Common myeloid progenitor, CD34-positive (primary cell): ENCODE measurements at regions of chr2 and their contacts with region 1.

Region 1: GRCh38 chr2:54558188-54559005 is 102.3 kb downstream of the SPTBN1 start:
- DNase-seq: peak; percentile 81 to 95 (median 92)
- H3K4me3 ChIP-seq: peak overlapping the region; percentile 80 to 100 (median 95)
- H3K27ac ChIP-seq: peak overlapping the region; percentile 81 to 93
- H3K4me1 ChIP-seq: peaks cover 24 to 50% (median 35%) of the 10 kb centered on the region in 4 experiments
- H3K27me3 ChIP-seq: no peaks in the 10 kb centered on the region

Region 2: DNA sequence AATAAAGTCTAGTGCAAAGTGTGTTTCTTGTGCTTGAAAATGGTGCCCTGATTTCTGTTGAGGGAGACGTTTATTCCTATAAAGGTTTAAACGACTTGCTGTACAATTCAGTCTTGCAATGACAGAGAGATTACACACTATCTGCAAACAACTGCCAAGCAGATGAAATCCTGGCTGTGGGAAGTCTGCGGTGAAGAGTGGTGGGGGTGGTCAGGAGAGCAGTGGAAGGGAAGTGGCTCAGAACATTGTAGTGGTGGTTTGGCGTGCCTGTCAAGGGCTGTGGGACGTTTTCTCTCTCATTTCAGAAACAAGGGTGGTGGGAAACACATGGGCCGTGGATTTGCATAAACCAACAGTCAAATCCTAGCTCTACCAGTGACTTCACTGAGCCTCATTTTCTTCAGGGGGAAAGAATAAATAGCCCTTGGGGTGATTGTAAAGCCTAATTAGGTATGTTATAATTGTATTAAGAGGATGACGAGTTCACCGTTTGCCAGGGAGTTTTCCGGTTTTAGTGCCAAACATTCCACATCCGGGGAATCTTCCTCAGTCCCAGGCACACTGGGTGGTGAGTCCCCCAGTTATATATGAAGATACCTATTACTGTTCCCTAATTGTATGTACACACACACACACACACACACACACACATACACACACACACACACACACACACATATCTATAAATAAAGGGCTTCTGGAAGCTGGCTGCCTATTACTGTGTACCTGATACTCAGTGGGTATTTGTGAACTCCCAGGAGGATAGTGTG is 12.7 kb after region 1 on chr2:
- CTCF ChIA-PET with region 1: interaction called, 26 read pairs
- POLR2A ChIA-PET with region 1: interaction called, 18 read pairs
- DNase-seq: peak; percentile 87 to 98 (median 97)
- H3K4me3 ChIP-seq: peak overlapping the region in 5 of 7 experiments; percentile 20 to 62 (median 38)
- H3K27ac ChIP-seq: peak overlapping the region; percentile 26 to 72
- H3K4me1 ChIP-seq: peaks cover 52 to 87% (median 74%) of the 10 kb centered on the region in 4 experiments
- H3K27me3 ChIP-seq: no peaks in the 10 kb centered on the region

Region 3: DNA sequence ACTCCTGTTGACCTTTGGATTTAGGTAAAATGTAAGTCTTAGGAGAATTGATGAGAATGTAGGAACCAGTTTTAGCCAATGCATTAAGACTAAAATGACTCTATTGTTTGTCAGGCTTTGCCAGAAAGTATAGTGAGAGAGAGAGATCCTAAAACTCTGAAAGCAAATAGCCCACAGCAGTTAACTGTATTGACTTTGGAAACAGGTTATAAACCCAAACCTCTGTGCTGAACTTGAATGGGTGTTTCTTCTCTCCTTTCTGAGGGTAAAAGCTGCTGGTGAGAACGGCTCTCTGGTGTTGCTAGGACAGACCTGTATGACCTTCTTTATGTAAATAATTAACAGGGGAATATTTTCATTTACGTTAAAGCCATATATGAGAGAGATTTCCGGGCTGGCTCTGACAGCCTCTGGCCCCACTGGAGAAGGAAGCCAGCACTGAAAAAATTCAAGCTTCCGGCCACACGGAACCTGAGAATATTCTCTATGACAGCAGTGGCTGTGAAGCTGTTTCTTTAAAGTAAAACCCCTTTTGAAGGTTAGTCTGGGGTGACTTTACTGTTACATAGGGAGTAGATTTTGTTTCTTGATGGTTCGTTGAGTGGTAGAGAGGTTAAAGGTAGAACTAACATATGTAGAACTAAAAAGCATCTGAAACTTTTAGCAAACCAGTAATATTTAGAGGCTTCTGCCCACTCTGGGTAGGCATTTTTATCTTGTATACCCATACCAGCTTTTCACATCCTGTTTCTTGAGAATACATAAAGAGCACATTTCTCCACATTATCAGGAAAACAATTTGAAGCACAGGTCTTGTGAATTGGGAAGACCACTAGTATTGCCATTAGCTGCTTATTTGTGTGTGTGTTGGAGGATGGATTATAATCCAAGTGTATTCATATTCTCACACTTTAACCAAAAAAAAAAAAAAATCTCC is 21.6 kb after region 1 on chr2:
- CTCF ChIA-PET with region 1: interaction called, 14 read pairs
- POLR2A ChIA-PET with region 1: interaction called, 3 read pairs
- DNase-seq: peak in 2 of 3 donors; percentile 72 to 75
- H3K4me3 ChIP-seq: peak overlapping the region in 6 of 7 experiments; percentile 2 to 62 (median 41)
- H3K27ac ChIP-seq: peak overlapping the region; percentile 67 to 80
- H3K4me1 ChIP-seq: peaks cover 53 to 96% (median 91%) of the 10 kb centered on the region in 4 experiments
- H3K27me3 ChIP-seq: no peaks in the 10 kb centered on the region

Region 4: DNA sequence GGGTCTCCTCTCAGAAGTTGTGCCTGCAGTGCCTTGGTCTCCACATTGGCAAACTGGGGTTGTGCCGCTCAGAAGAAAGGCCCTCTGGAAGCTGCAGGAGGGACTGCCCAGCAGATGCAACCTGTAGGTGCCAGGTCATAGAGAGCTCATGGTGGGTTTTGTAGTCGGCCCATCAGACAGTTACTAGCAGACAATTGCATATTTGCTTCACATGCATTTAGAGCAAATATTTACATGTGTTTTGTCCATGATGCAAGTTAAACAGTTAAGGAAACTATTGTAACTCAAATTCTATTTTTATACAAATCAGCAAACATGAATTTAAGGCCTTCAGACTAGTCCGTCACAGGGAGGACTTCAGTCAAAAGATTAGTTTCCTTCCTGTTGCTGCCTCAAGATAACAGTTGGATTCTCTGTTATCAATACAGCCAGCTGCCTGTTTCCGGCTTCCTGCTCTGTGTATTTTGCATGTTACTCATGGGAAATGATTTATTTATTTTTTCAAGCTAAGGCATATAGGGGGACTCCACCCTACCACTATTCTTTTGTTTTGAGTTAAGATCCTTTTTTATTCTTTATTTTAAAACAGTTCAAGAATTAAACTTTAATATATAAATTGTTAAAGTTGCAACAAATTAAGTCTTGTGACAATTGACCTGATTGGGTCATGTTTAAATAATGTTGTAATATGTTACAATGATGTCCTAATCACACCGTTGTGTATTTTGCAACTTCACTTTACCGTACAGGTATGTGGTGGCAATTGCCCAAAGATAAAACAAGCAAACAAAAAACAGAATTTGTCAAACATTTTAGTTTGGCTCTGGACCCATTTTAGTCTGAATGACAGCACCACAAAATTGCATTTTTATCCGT is 31.2 kb after region 1 on chr2:
- CTCF ChIA-PET with region 1: interaction called, 26 read pairs
- POLR2A ChIA-PET with region 1: interaction called, 21 read pairs
- DNase-seq: peak; percentile 97 to 99 (median 98)
- H3K4me3 ChIP-seq: peak overlapping the region in 6 of 7 experiments; percentile 4 to 67 (median 49)
- H3K27ac ChIP-seq: peak overlapping the region; percentile 87 to 95
- H3K4me1 ChIP-seq: peaks cover 71 to 96% (median 83%) of the 10 kb centered on the region in 4 experiments
- H3K27me3 ChIP-seq: no peaks in the 10 kb centered on the region

Region 5: GRCh38 chr2:54606393-54606969 is 48.1 kb after region 1 on chr2:
- CTCF ChIA-PET with region 1: interaction called, 30 read pairs
- POLR2A ChIA-PET with region 1: interaction called, 15 read pairs
- DNase-seq: no peak
- H3K4me3 ChIP-seq: peak overlapping the region in 1 of 7 experiments; percentile 34
- H3K27ac ChIP-seq: peak overlapping the region; percentile 1 to 75
- H3K4me1 ChIP-seq: peaks cover 46 to 68% (median 55%) of the 10 kb centered on the region in 4 experiments
- H3K27me3 ChIP-seq: no peaks in the 10 kb centered on the region

Region 6: GRCh38 chr2:54629914-54630857 is 71.8 kb after region 1 on chr2:
- CTCF ChIA-PET with region 1: no interaction called
- POLR2A ChIA-PET with region 1: no interaction called
- DNase-seq: peak in 2 of 3 donors; percentile 20 to 33
- H3K4me3 ChIP-seq: no peak overlapping the region
- H3K27ac ChIP-seq: no peak overlapping the region
- H3K4me1 ChIP-seq: no peaks in the 10 kb centered on the region
- H3K27me3 ChIP-seq: no peaks in the 10 kb centered on the region